PC-3 (cell line): ENCODE measurements at regions of chr4 and their contacts with region 1.

Region 1: GRCh38 chr4:62644372-62644771 is 1444.2 kb downstream of the ADGRL3 start:
- DNase-seq: peak; percentile 74
- ATAC-seq: peak; percentile 69
- H3K4me3 ChIP-seq: no peak overlapping the region
- H3K27ac ChIP-seq: no peak overlapping the region
- H3K4me1 ChIP-seq: peaks cover 15% of the 10 kb centered on the region
- H3K27me3 ChIP-seq: no peaks in the 10 kb centered on the region
- CTCF ChIP-seq: peak; percentile 77

Region 2: DNA sequence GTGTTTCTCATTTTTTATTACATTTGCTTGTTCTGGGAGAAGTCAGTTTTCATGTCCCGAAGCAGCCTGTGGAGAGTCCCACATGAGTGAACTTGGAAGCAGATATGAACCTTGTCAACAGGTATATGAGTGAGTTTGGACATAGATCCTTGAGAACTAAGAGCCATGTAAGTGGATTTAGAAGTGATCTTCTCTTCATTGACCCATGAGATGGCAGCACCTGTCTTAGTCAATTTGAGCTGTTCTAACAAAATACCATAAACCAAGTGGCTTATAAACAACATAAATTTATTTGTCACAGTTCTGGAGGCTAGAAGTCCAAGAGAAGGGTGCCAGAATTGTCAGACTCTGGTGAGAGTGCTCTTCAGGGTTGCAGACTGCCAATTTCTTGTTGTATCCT is 400.5 kb before region 1 on chr4:
- CTCF ChIA-PET with region 1: no interaction called
- POLR2A ChIA-PET with region 1: no interaction called
- intact Hi-C with region 1: loop called (anchors 1 kb)
- DNase-seq: peak; percentile 28
- ATAC-seq: peak; percentile 78
- H3K4me3 ChIP-seq: no peak overlapping the region
- H3K27ac ChIP-seq: no peak overlapping the region
- H3K4me1 ChIP-seq: no peaks in the 10 kb centered on the region
- H3K27me3 ChIP-seq: no peaks in the 10 kb centered on the region
- CTCF ChIP-seq: peak; percentile 47

Region 3: DNA sequence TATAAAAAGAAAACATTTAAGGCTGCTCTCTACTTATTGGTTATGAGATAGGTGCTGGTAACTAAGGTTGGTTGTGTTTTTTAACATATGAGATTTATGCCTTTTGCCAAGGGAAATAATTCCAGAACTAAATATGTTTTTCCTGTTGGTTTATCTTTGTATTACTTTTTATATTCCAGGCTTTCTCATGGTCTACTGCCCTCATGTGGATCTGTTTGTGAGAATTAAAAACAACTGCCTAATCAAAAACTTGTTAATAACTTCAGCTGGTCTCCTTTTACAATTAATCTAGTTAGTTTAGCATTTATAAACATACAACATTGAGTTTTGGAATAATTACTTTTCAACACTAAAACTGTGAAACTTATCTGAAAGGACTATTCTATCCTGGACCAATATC is 235.9 kb before region 1 on chr4:
- CTCF ChIA-PET with region 1: interaction called, 3 read pairs
- POLR2A ChIA-PET with region 1: no interaction called
- intact Hi-C with region 1: loop called (anchors 1 kb)
- DNase-seq: peak; percentile 35
- ATAC-seq: no peak
- H3K4me3 ChIP-seq: no peak overlapping the region
- H3K27ac ChIP-seq: no peak overlapping the region
- H3K4me1 ChIP-seq: no peaks in the 10 kb centered on the region
- H3K27me3 ChIP-seq: no peaks in the 10 kb centered on the region
- CTCF ChIP-seq: peak; percentile 65

Region 4: GRCh38 chr4:62548108-62548524 is 96.3 kb before region 1 on chr4:
- CTCF ChIA-PET with region 1: no interaction called
- POLR2A ChIA-PET with region 1: no interaction called
- intact Hi-C with region 1: loop called (anchors 1 kb)
- DNase-seq: peak; percentile 98
- ATAC-seq: peak; percentile 90
- H3K4me3 ChIP-seq: no peak overlapping the region
- H3K27ac ChIP-seq: peak overlapping the region; percentile 92
- H3K4me1 ChIP-seq: peaks cover 34% of the 10 kb centered on the region
- H3K27me3 ChIP-seq: no peaks in the 10 kb centered on the region
- CTCF ChIP-seq: peak; percentile 83

Region 5: GRCh38 chr4:62601737-62602136 is 42.6 kb before region 1 on chr4:
- CTCF ChIA-PET with region 1: no interaction called
- POLR2A ChIA-PET with region 1: no interaction called
- intact Hi-C with region 1: loop called (anchors 5 kb)
- DNase-seq: peak; percentile 37
- ATAC-seq: peak; percentile 65; the same call in 1 of the 2 replicates
- H3K4me3 ChIP-seq: peak overlapping the region; percentile 37; the same call in 1 of the 2 replicates
- H3K27ac ChIP-seq: 0 out of 2 replicates have a peak overlapping the region, but pooled peaks have one; percentile 17
- H3K4me1 ChIP-seq: peaks cover 6% of the 10 kb centered on the region
- H3K27me3 ChIP-seq: no peaks in the 10 kb centered on the region
- CTCF ChIP-seq: no peak